Colonic mucosa (tissue), 4 donors: ENCODE measurements at regions of chr13 and their contacts with region 1.

Region 1: DNA sequence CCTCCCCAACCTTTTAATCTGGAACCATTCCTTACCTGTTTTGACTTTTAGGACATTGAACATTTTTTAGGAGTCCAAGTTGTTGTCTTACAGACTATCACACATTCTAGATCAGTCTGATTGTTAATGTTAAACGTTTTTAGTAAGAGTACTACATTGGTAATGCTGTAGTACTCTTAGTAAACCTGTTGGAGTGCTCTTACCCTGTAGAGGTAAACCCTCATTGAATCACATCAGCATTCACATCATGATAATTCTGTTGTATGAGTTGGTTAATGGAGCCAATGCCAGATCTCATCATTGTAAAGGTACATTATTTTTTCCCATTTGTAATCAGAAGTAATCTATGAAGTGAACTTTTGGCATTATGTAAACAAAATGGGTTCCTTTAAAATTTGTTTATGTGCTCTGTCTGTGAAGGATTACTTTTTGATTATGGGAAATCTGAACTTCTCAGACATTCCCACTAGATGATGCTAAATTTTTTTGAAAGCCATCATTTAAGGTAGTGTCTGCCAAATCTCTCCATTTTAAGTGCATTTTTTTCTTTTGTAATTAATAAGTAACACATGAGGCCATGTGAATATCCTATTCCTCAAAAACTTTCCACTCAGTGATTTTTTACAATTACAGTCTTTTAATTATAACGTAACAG is 55.2 kb downstream of the VWA8 start:
- DNase-seq: no peak
- H3K4me3 ChIP-seq: no peak overlapping the region
- H3K27ac ChIP-seq: no peak overlapping the region
- H3K4me1 ChIP-seq: no peaks in the 10 kb centered on the region
- H3K27me3 ChIP-seq: no peaks in the 10 kb centered on the region
- CTCF ChIP-seq: peak; percentile 59

Region 2: DNA sequence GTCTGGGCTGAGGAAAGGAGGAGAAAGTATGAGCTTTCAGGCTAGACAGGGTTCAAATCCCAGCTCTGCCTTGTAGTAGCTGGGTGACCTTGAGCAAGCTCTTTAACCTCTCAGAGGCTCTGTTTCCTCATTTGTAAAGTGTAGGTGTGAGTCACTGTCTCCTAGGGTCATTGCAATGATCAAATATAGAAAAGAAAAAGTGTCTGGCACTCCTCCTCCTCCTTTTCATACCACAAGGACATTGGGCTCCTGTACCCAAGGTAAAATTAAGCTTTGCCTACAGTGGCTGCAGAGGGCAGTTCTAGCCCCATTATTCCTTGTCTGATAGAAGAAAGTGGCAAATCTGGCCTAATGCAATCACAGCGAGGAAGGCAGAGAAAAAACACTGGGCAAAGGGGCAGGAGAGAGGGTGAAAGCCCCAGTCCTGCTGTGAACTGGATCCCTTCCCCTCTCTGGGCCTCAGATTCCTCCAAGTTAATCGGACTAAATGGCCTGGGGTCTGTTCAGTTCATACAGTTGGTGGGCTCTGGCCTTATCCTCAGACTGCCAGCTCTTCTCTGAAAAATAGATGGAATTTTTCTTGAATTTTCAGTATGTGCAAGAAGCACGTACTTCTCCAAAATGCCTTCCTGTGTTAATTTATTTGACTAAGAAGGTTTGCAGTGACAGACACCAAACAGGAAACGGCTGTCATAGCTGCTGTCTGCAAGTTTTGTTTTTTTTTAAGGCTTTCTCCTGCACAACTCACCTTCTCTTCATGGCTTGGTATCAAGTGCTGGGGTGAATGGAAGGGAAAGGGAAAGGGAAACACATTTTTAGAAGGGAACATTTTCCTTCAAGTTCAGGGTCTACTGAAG is 413.1 kb before region 1 on chr13:
- intact Hi-C with region 1: no loop called
- DNase-seq: no peak
- H3K4me3 ChIP-seq: no peak overlapping the region
- H3K27ac ChIP-seq: peak overlapping the region; percentile 24
- H3K4me1 ChIP-seq: no peaks in the 10 kb centered on the region
- H3K27me3 ChIP-seq: no peaks in the 10 kb centered on the region
- CTCF ChIP-seq: no peak

Region 3: GRCh38 chr13:41546372-41547190 is 359.1 kb before region 1 on chr13:
- intact Hi-C with region 1: no loop called
- DNase-seq: peak; percentile 15
- H3K4me3 ChIP-seq: no peak overlapping the region
- H3K27ac ChIP-seq: no peak overlapping the region
- H3K4me1 ChIP-seq: no peaks in the 10 kb centered on the region
- H3K27me3 ChIP-seq: no peaks in the 10 kb centered on the region
- CTCF ChIP-seq: no peak

Region 4: DNA sequence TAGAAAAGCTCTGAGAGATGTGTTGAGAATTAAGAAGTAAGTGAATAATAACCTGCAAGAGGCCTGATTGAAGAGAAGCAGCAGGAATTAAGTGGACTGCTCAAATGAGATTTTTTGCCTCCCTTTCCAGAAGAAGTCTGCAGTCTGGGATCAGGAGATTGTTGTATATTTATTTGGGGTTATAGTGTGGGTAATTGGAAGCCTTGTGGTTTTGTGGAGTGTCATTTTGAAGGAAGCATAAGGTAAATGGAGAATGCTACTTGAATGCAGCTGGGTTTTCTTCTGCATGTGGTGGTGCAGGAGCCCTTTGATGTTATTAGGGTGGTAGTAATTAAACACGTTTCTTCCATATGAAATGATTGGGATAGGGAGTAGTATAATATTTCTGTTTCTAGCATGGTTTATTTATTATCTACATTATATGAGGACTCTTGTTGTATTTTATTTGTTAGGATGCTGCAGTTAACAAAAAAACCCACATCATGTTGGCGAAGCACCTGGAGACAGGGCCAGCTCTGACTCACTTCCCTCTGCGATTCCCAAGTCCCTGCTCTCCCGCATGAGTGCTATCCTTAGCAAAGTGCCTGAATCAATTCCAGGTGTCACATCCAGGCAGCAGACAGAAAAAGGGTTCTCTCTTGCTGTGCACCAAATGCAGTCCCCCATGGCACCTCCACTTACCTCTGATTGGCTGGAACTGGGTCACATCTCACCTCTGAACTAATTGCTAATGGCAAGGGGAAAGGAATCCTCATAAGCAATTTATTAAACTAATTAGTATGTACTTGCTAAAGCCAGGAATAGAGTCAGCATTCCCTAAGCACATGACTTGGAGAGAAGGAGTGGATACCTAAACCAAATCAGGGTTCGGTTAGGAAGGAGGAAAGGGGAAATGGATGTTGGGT is 197.5 kb after region 1 on chr13:
- intact Hi-C with region 1: loop called (anchors 10 kb)
- DNase-seq: no peak
- H3K4me3 ChIP-seq: no peak overlapping the region
- H3K27ac ChIP-seq: no peak overlapping the region
- H3K4me1 ChIP-seq: no peaks in the 10 kb centered on the region
- H3K27me3 ChIP-seq: no peaks in the 10 kb centered on the region
- CTCF ChIP-seq: no peak

Region 5: GRCh38 chr13:42354241-42355091 is 448.7 kb after region 1 on chr13:
- intact Hi-C with region 1: no loop called
- DNase-seq: no peak
- H3K4me3 ChIP-seq: no peak overlapping the region
- H3K27ac ChIP-seq: no peak overlapping the region
- H3K4me1 ChIP-seq: no peaks in the 10 kb centered on the region
- H3K27me3 ChIP-seq: no peaks in the 10 kb centered on the region
- CTCF ChIP-seq: no peak